ENCODE measurements at regions of chr4 and their contacts with region 1.

Region 1: DNA sequence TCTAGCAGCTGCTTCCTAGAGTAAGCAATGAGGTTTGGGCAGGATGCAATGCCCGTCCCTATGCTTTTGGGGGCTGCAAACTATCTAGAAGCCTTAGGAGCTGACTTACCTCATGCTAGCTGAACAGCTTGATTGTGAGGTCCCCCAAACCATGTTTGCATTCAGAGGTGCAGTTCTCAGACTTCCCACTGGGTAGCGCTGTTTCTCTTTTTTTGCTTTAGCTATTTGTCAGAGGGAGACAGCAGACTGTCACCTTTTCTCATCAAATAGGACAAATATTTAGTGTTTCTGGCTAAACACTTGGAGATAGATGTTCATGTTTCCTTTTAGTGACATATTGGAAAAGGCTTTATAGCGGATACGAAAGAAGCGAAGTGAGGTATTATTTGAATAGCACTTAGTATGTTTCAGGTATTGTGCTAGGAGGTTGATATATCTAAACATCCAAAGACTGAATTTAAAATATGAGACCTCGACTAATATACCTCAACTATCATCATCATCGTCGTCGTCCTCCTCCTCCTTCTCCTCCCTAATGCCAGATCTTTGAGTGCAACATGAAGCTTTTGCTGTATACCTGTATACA is 18.7 kb upstream of the TMEM192 start:
- DNase-seq: peak; percentile 21
- H3K4me3 ChIP-seq: no peak overlapping the region
- H3K27ac ChIP-seq: no peak overlapping the region
- H3K27me3 ChIP-seq: peaks cover 4% of the 10 kb centered on the region
- CTCF ChIP-seq: peak; percentile 95

Region 2: GRCh38 chr4:164768516-164768915 is 362.8 kb before region 1 on chr4:
- CTCF ChIA-PET with region 1: no interaction called
- POLR2A ChIA-PET with region 1: no interaction called
- DNase-seq: no peak
- H3K4me3 ChIP-seq: no peak overlapping the region
- H3K27ac ChIP-seq: no peak overlapping the region
- H3K27me3 ChIP-seq: no peaks in the 10 kb centered on the region
- CTCF ChIP-seq: peak; percentile 32

Region 3: GRCh38 chr4:165058666-165059065 is 72.7 kb before region 1 on chr4:
- CTCF ChIA-PET with region 1: no interaction called
- POLR2A ChIA-PET with region 1: no interaction called
- DNase-seq: no peak
- H3K4me3 ChIP-seq: no peak overlapping the region
- H3K27ac ChIP-seq: no peak overlapping the region
- H3K27me3 ChIP-seq: no peaks in the 10 kb centered on the region
- CTCF ChIP-seq: no peak

Region 4: GRCh38 chr4:165112368-165113139 is 18.8 kb before region 1 on chr4 and contains the start of gene TMEM192:
- CTCF ChIA-PET with region 1: interaction called, 21 read pairs
- POLR2A ChIA-PET with region 1: interaction called, 3 read pairs
- DNase-seq: peak; percentile 53
- H3K4me3 ChIP-seq: peak within 1 kb of the TSS; percentile 85
- H3K27ac ChIP-seq: peak within 1 kb of the TSS; percentile 63
- H3K27me3 ChIP-seq: no peaks in the 10 kb centered on the region
- CTCF ChIP-seq: peak; percentile 45
- polyA plus RNA-seq, gene TMEM192: 15.3 and 15.8 TPM in 2 replicates

Region 5: GRCh38 chr4:165118256-165118909 is 13.0 kb before region 1 on chr4:
- CTCF ChIA-PET with region 1: interaction called, 35 read pairs
- POLR2A ChIA-PET with region 1: no interaction called
- DNase-seq: no peak
- H3K4me3 ChIP-seq: no peak overlapping the region
- H3K27ac ChIP-seq: no peak overlapping the region
- H3K27me3 ChIP-seq: no peaks in the 10 kb centered on the region
- CTCF ChIP-seq: no peak

Region 6: DNA sequence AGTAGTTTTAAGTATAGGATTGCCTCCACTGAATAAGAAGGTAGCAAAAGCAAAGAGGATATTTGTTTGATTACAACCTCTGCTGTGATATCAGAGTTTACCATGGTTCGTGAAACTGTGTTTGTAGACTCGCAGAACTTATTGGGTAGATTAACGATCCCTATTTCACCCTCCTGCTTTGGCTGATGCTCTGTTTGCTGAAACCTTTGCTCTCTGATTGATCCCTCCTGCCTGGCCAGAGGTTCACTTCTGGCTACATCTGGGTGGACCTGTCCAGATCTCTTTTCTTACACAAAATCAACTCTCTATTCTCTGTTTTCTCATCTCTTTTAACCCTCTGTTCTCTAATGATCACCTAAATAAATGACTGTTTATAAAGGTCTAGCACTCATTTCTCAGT is 19.2 kb after region 1 on chr4:
- CTCF ChIA-PET with region 1: interaction called, 10 read pairs
- POLR2A ChIA-PET with region 1: no interaction called
- DNase-seq: no peak
- H3K4me3 ChIP-seq: no peak overlapping the region
- H3K27ac ChIP-seq: no peak overlapping the region
- H3K27me3 ChIP-seq: no peaks in the 10 kb centered on the region
- CTCF ChIP-seq: no peak

Region 7: DNA sequence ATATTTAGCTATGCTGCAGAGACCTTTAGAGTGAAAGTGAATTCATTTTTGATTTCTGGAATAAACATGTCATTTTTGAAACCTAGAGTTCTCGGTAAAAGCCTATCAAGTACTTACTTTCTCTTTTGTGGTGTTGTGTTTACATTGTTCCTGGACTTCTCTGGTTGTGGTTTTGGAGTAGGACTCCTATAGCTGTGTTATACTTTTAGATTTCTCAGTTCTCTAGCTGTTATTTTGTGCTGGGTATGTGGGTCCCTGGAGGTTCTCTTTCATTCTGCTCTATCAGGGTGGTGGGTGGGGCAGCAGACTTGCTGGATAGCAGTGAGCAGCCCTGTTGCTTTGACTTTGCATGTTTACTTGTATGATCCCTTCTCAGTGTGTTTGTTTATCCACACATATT is 170.5 kb after region 1 on chr4:
- CTCF ChIA-PET with region 1: no interaction called
- POLR2A ChIA-PET with region 1: no interaction called
- DNase-seq: no peak
- H3K4me3 ChIP-seq: peak overlapping the region; percentile 42
- H3K27ac ChIP-seq: no peak overlapping the region
- H3K27me3 ChIP-seq: no peaks in the 10 kb centered on the region
- CTCF ChIP-seq: no peak

Region 8: GRCh38 chr4:165343353-165344191 is 212.2 kb after region 1 on chr4:
- CTCF ChIA-PET with region 1: interaction called, 125 read pairs
- POLR2A ChIA-PET with region 1: no interaction called
- DNase-seq: no peak
- H3K4me3 ChIP-seq: no peak overlapping the region
- H3K27ac ChIP-seq: no peak overlapping the region
- H3K27me3 ChIP-seq: peaks cover 4% of the 10 kb centered on the region
- CTCF ChIP-seq: peak; percentile 48

Region 9: GRCh38 chr4:165454417-165454816 is 323.1 kb after region 1 on chr4:
- CTCF ChIA-PET with region 1: interaction called, 38 read pairs
- POLR2A ChIA-PET with region 1: no interaction called
- DNase-seq: no peak
- H3K4me3 ChIP-seq: no peak overlapping the region
- H3K27ac ChIP-seq: no peak overlapping the region
- H3K27me3 ChIP-seq: no peaks in the 10 kb centered on the region
- CTCF ChIP-seq: no peak

Region 10: GRCh38 chr4:165464813-165465381 is 333.6 kb after region 1 on chr4:
- CTCF ChIA-PET with region 1: interaction called, 89 read pairs
- POLR2A ChIA-PET with region 1: no interaction called
- DNase-seq: peak; percentile 11
- H3K4me3 ChIP-seq: no peak overlapping the region
- H3K27ac ChIP-seq: no peak overlapping the region
- H3K27me3 ChIP-seq: no peaks in the 10 kb centered on the region
- CTCF ChIP-seq: peak; percentile 80